Activated CD8-positive, alpha-beta memory T cell treated with anti-CD3 and anti-CD28 coated beads, Interleukin-2, amount 10 ng/mL, durations not matched to agents 7 days and 5 days (primary cell): ENCODE measurements at regions of chr15 and their contacts with region 1.

Region 1: DNA sequence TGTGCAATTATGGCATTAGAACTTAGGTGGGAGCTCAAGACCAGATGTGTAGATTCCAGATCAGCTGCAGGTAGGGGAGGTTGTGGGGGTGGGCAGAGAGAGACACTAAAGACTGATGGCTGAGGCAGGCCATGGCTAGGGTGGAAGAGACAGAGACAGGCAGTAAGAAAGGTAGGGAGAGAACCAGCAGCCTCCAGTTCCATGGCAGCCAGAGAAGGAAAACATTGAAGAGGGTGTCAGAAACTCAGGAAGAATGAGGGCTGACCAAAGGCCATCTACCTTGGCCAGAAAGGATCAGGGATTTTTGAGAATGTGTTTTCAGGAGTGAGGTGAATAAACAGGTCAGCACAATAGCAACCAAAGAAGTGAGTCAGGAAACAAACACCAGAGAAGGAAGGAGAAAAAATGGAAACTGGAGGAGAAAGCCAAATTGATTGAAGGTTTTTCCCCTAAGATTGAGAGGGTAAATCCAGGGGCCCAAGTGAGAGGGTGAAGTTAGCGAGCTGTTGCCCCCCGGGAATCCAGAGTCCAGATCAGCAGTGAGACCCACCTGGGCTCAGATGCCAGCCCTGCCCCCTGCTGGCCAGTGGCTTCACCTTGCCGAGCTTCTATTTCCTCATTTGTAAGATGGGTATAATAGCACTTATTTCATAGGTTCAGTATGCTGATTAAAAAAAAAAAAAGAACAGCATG is 41.0 kb downstream of the ABHD2 start:
- DNase-seq: peak; percentile 61
- ATAC-seq: no peak
- H3K4me3 Mint-ChIP-seq: no peak overlapping the region
- H3K27ac Mint-ChIP-seq: no peak overlapping the region
- H3K4me1 Mint-ChIP-seq: peaks cover 40% of the 10 kb centered on the region
- H3K27me3 Mint-ChIP-seq: no peaks in the 10 kb centered on the region

Region 2: GRCh38 chr15:89034288-89034687 is 95.0 kb before region 1 on chr15:
- CTCF ChIA-PET with region 1: no interaction called
- DNase-seq: no peak
- ATAC-seq: no peak
- H3K4me3 Mint-ChIP-seq: no peak overlapping the region
- H3K27ac Mint-ChIP-seq: no peak overlapping the region
- H3K4me1 Mint-ChIP-seq: no peaks in the 10 kb centered on the region
- H3K27me3 Mint-ChIP-seq: peaks cover 39% of the 10 kb centered on the region

Region 3: DNA sequence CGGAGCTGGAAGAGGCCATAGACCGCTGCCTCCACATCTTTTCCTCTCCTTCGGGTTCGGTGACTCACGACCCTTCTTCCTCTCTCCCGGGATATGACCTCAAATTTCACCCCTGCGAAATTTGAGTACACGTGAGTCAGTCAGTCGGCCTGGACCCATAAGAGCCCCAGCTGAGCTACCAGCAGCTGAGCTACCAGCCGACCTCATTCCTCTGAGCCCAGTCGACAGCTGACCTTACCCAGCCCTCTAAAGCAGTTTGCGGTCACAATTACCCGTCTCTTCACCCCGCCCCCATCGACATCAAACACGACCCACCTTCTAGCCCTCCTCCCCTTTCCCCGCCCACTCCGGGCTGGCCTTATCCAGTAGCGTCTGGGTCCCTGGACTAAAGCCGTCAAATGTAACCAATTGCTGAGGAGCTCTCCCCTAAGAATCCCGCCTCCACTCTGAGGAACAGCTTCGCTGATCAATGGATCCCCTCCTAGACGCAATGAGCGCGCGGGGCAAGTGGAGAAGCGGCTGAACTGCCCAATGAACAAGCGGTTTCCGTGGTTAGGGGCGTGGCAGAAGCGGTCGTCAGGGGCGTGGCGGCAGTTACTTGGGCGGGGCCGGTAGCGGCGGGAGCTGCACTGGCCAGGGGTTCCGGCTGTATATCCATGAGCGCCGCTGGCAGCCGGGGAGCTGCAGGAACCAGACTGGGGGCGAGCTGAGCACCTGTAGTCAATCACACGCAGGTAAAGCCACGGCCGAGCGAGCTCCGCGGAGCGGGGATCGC is 41.3 kb before region 1 on chr15 and contains the start of gene ABHD2:
- CTCF ChIA-PET with region 1: interaction called, 28 read pairs
- DNase-seq: peak; percentile 99
- ATAC-seq: peak; percentile 99
- H3K4me3 Mint-ChIP-seq: no peak within 1 kb of the TSS
- H3K27ac Mint-ChIP-seq: no peak within 1 kb of the TSS
- H3K4me1 Mint-ChIP-seq: peaks cover 33% of the 10 kb centered on the region
- H3K27me3 Mint-ChIP-seq: no peaks in the 10 kb centered on the region
- total RNA-seq, gene ABHD2: 53.3 to 58.1 TPM

Region 4: DNA sequence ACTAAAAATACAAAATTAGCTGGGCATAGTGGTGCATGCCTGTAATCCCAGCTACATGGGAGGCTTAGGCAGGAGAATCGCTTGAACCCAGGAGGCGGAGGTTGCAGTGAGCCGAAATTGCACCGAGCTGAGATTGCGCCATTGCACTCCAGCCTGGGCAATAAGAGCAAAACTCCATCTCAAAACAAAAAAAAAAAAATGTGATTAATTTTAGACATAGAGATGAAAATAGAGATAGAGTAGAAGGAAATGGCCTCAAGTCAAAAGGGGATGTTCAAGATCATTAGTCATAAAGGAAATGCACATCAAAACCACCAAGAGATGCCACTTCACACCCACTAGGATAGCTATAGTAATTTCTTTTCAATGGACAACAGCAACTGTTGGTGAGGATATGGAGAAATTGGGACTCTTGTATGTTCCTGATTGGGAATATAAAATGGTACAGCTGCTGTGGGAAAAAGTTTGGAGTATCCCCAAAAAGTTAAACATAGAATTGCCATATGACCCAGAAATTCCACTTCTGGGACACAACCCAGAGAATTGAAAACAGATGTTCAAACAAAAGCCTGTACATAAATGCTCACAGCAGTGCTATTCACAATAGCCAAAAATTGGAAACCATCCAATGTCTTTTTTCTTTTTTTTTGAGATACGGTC is 14.4 kb after region 1 on chr15:
- CTCF ChIA-PET with region 1: interaction called, 19 read pairs
- DNase-seq: no peak
- ATAC-seq: peak; percentile 88
- H3K4me3 Mint-ChIP-seq: no peak overlapping the region
- H3K27ac Mint-ChIP-seq: peak overlapping the region; percentile 19
- H3K4me1 Mint-ChIP-seq: peaks cover 33% of the 10 kb centered on the region
- H3K27me3 Mint-ChIP-seq: no peaks in the 10 kb centered on the region